B cell (primary cell): ENCODE measurements at regions of chr19 and their contacts with region 1.

Region 1: DNA sequence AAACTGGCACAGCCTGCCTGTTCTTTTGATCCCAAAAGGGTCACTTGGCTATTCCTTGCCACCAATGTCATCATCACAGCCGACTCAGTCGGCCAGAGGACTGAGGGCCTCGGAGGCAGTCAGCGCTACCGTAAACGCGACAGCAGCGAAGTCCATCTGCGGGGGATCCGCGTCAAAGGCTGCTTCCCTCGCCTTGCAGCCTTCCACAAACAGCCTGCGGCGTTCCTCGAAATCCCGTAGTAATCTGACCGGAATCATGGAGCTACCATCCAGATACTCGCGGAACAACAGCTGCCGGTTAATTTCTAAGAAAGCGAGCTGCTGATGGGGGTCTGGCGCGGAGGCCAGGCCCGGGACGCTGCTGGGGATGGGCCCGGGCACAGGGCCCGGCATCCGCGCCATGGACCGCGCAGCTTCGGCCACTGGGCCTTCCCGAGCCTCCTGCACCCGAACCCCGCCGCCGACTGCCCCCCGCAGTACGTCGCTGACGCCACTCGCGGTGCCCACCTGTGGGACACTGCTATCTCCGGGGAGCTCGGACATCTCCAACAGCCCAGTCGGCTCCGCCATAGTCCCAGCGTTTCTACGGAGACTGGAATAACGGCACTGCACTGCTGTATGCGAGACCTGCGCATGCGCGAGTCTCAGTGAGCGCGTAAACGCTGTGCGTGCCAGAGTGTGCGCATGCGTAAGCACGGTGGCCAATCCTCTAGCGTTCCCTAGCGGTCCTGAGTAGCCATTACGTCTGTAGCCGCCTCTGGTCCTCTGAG is at the start of gene EID2B:
- DNase-seq: peak; percentile 97
- ATAC-seq: peak; percentile 99
- H3K4me3 ChIP-seq: peak within 1 kb of the TSS; percentile 75 to 98 (median 78)
- H3K4me3 Mint-ChIP-seq: peak within 1 kb of the TSS; percentile 96
- H3K27ac ChIP-seq: peak within 1 kb of the TSS; percentile 37 to 83
- H3K27ac Mint-ChIP-seq: peak within 1 kb of the TSS; percentile 92
- H3K4me1 ChIP-seq: peaks cover 13 to 14% of the 10 kb centered on the region in 2 donors
- H3K4me1 Mint-ChIP-seq: peaks cover 25% of the 10 kb centered on the region
- H3K27me3 ChIP-seq: no peaks in the 10 kb centered on the region
- H3K27me3 Mint-ChIP-seq: no peaks in the 10 kb centered on the region
- CTCF ChIP-seq: peak; percentile 98
- total RNA-seq, gene EID2B: 6.0 and 7.6 TPM in 2 replicates

Region 2: DNA sequence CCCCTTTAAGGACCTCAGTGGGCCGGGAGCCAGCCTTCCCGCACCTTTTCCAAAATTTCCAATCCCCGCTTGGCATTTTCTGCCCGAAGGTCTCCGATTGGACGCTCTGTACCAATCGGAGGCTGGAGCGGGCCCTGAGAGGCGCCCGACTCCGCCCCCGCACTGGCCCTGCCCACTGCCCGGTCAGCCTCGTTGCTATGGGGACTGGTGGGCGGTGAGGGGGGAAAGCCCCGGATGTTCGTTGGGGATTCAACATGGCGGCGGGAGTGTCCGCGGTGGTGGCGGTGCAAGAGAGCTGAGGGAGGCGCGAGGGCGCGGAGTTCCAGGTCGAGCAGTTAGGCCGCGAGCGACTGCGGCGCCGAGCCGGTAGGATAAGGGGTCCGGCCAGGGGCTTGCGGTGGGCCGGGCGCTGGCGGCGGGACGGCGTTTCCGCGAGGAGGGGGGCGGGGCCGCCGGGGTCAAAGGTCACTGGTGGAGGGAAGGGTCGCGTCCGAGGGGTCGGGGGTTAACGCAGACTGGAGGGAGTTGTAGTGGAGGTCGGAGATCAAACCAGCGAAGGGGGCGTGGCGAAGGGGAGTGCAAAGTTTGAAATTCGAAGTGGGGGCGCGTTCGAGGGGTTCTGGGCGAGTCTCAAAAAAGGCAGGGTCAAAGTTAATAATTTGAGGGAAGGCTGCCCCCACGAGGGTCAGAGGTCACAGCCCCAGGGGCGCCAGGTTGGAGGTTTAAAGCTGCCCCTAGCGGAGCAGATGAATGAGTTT is 406.7 kb before region 1 on chr19 and contains the start of gene PAK4:
- CTCF ChIA-PET with region 1: interaction called, 5 read pairs
- POLR2A ChIA-PET with region 1: no interaction called
- intact Hi-C with region 1: loop called (anchors 1 kb)
- DNase-seq: peak; percentile 95
- ATAC-seq: peak; percentile 97
- H3K4me3 ChIP-seq: peak within 1 kb of the TSS; percentile 63 to 84 (median 74)
- H3K4me3 Mint-ChIP-seq: peak within 1 kb of the TSS; percentile 94
- H3K27ac ChIP-seq: peak within 1 kb of the TSS; percentile 62 to 92
- H3K27ac Mint-ChIP-seq: peak within 1 kb of the TSS; percentile 96
- H3K4me1 ChIP-seq: peaks cover 0 to 26% of the 10 kb centered on the region in 2 donors
- H3K4me1 Mint-ChIP-seq: peaks cover 47% of the 10 kb centered on the region
- H3K27me3 ChIP-seq: peaks cover 0 to 4% (median 2%) of the 10 kb centered on the region in 4 experiments
- H3K27me3 Mint-ChIP-seq: peaks cover 6% of the 10 kb centered on the region
- CTCF ChIP-seq: no peak
- total RNA-seq, gene PAK4: 13.6 and 23.3 TPM in 2 replicates

Region 3: DNA sequence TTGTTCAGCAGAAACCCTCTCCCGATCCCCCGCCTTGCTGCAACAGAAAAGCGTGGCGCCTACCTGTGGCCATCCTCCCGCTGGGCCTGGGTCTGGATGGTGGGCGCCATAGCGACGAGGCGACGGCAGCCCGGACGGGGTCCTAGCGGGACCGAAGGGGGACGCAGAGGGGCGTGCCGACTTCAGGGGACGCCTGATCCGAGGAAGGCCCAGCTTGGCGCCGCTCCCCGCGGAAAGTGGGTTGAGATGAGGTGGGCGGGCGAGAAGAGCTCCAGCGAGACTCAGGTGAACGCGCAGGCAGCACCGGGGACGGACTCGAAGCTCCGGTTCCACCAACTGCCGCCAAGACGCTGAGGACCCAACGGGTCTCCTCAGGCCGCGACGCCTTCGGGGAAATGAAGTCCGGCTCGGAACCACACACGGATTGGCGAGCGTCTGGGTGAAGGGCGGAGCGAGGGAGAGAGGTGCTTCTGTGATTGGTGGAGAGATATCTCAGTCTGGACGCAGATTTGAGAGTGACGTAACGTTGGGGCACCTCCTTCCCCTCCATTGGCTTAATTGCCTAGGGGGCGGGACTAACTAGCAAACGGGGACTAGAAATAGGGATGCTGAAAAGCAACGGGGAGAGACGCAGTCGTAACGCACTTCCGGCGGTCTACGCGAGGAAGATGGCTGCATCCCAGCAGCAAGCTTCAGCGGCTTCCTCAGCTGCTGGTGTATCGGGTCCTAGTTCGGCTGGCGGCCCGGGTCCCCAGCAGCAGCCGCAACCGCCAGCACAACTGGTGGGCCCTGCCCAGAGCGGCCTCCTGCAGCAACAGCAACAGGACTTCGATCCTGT is 141.4 kb before region 1 on chr19 and contains the starts of genes MED29 and PAF1:
- CTCF ChIA-PET with region 1: no interaction called
- POLR2A ChIA-PET with region 1: no interaction called
- intact Hi-C with region 1: loop called (anchors 2 kb)
- DNase-seq: peak; percentile 99
- ATAC-seq: peak; percentile 90
- H3K4me3 ChIP-seq: peak within 1 kb of the TSS; percentile 73 to 99 (median 90)
- H3K4me3 Mint-ChIP-seq: peak within 1 kb of the TSS; percentile 87
- H3K27ac ChIP-seq: peak within 1 kb of the TSS; percentile 96 to 97
- H3K27ac Mint-ChIP-seq: peak within 1 kb of the TSS; percentile 99
- H3K4me1 ChIP-seq: peaks cover 16 to 28% of the 10 kb centered on the region in 2 donors
- H3K4me1 Mint-ChIP-seq: peaks cover 39% of the 10 kb centered on the region
- H3K27me3 ChIP-seq: no peaks in the 10 kb centered on the region
- H3K27me3 Mint-ChIP-seq: no peaks in the 10 kb centered on the region
- CTCF ChIP-seq: no peak
- total RNA-seq, gene MED29: 47.5 and 53.0 TPM in 2 replicates
- total RNA-seq, gene PAF1: 54.6 and 59.9 TPM in 2 replicates

Region 4: GRCh38 chr19:39474139-39474622 is 58.2 kb before region 1 on chr19:
- CTCF ChIA-PET with region 1: interaction called, 40 read pairs
- POLR2A ChIA-PET with region 1: no interaction called
- intact Hi-C with region 1: loop called (anchors 1 kb)
- DNase-seq: peak; percentile 77
- ATAC-seq: peak; percentile 87
- H3K4me3 ChIP-seq: no peak overlapping the region
- H3K4me3 Mint-ChIP-seq: no peak overlapping the region
- H3K27ac ChIP-seq: no peak overlapping the region
- H3K27ac Mint-ChIP-seq: no peak overlapping the region
- H3K4me1 ChIP-seq: no peaks in the 10 kb centered on the region
- H3K4me1 Mint-ChIP-seq: peaks cover 1% of the 10 kb centered on the region
- H3K27me3 ChIP-seq: no peaks in the 10 kb centered on the region
- H3K27me3 Mint-ChIP-seq: no peaks in the 10 kb centered on the region
- CTCF ChIP-seq: peak; percentile 74

Region 5: DNA sequence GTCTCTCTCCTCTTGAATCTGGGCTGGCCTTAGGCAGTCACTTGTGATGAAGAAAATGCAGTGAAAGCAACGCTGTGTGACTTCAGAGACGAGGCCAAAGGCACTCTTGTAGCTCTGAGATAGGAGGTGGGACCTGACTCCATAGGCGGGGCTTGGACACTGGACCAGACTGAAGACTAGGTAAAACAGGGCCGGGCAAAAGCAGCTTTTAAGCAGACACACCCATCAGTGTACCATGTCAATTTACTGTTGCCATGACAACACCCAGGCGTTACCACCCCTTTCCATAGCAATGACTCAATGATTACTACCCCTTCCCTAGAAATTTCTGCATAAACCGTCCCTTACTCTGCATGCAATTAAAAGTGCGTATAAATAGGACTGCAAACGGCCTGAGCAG is 14.2 kb after region 1 on chr19:
- CTCF ChIA-PET with region 1: interaction called, 15 read pairs
- POLR2A ChIA-PET with region 1: no interaction called
- intact Hi-C with region 1: no loop called
- DNase-seq: no peak
- ATAC-seq: no peak
- H3K4me3 ChIP-seq: no peak overlapping the region
- H3K4me3 Mint-ChIP-seq: no peak overlapping the region
- H3K27ac ChIP-seq: no peak overlapping the region
- H3K27ac Mint-ChIP-seq: no peak overlapping the region
- H3K4me1 ChIP-seq: peaks cover 12 to 14% of the 10 kb centered on the region in 2 donors
- H3K4me1 Mint-ChIP-seq: peaks cover 12% of the 10 kb centered on the region
- H3K27me3 ChIP-seq: peaks cover 0 to 8% (median 0%) of the 10 kb centered on the region in 4 experiments
- H3K27me3 Mint-ChIP-seq: peaks cover 15% of the 10 kb centered on the region
- CTCF ChIP-seq: no peak